HepG2 (cell line): ENCODE measurements at regions of chr9 and their contacts with region 1.

Region 1: DNA sequence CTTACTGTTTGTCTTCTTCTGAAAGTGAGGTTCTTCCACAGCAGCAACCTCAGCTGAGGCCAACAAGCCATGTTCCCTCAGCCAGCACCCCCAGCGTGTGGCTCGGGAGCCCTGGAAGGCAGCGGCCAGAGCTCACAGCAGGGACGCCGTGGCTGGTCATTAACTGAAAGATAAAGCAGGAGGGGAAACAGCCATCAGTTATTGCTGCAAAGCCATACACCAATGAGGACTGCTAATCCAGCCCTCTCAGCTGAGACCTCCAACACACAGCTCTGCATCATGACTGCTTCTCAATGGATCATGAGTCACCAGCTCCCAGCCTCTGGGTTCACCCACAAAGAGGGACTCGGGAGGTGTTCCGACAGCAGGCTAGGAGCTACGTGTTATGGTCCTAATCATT is 24.3 kb downstream of the ABCA1 start:
- DNase-seq: peak; percentile 38
- ATAC-seq: peak; percentile 29
- H3K4me3 ChIP-seq: peak overlapping the region in 2 of 3 experiments; percentile 29 to 37; a peak in 3 of 6 replicates
- H3K27ac ChIP-seq: peak overlapping the region; percentile 43
- H3K4me1 ChIP-seq: peaks cover 100% of the 10 kb centered on the region
- H3K27me3 ChIP-seq: no peaks in the 10 kb centered on the region
- CTCF ChIP-seq: no peak
- EP300 ChIP-seq: no peak
- POLR2A ChIP-seq: peak in 1 of 2 experiments; percentile 25; a peak in 1 of 4 replicates
- RAD21 ChIP-seq: no peak

Region 2: DNA sequence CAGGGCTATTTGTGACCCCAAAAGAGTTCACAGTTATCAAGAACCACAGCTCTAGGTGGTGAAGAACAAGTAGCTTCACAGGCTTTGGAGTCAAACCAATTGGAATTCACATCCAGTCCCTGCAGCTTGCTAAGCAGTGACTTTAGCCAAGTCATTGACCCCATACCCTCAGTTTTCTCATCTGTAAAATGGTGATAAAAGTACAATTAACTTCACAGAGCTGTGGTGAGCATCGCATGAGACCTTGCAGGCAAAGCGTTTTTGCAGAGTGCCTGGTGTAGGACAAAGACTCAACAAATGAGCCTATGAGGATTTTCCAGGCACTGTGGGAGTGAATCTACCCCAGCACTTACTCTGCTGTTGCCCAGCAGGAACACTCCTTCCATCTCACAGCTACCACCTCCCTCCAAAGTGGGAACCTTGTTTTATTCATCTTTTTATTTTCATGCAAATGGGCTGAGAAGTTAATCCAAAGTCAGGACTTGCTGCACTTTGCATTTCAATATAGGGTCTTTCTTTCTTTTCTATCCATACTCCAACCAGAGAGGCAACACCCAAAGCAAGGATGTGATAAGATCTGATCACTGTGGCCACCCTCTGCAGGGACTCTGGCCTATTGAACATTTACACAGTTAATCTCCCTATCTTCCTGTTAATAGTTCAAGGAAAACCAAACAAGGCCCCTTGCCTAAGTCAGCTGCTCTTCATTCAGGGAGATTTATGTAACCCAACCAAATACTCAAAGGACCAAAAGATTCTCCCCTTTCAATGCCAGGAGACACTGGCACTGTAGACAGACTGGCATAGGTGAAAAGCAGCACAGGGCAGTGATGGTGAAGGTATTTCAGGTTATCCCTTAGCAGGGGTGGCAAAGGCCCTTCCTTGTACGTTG is 17.5 kb before region 1 on chr9:
- CTCF ChIA-PET with region 1: no interaction called
- POLR2A ChIA-PET with region 1: interaction called, 94 read pairs
- in situ Hi-C with region 1: no loop called
- intact Hi-C with region 1: no loop called
- DNase-seq: peak; percentile 93
- ATAC-seq: peak; percentile 72
- H3K4me3 ChIP-seq: peak overlapping the region in 1 of 3 experiments; percentile 49; a peak in 1 of 6 replicates
- H3K27ac ChIP-seq: peak overlapping the region; percentile 85
- H3K4me1 ChIP-seq: peaks cover 97% of the 10 kb centered on the region
- H3K27me3 ChIP-seq: no peaks in the 10 kb centered on the region
- CTCF ChIP-seq: no peak
- EP300 ChIP-seq: peak; percentile 76 to 98; a peak in 3 of 4 replicates
- POLR2A ChIP-seq: peak; percentile 33; a peak in 1 of 4 replicates
- RAD21 ChIP-seq: no peak

Region 3: DNA sequence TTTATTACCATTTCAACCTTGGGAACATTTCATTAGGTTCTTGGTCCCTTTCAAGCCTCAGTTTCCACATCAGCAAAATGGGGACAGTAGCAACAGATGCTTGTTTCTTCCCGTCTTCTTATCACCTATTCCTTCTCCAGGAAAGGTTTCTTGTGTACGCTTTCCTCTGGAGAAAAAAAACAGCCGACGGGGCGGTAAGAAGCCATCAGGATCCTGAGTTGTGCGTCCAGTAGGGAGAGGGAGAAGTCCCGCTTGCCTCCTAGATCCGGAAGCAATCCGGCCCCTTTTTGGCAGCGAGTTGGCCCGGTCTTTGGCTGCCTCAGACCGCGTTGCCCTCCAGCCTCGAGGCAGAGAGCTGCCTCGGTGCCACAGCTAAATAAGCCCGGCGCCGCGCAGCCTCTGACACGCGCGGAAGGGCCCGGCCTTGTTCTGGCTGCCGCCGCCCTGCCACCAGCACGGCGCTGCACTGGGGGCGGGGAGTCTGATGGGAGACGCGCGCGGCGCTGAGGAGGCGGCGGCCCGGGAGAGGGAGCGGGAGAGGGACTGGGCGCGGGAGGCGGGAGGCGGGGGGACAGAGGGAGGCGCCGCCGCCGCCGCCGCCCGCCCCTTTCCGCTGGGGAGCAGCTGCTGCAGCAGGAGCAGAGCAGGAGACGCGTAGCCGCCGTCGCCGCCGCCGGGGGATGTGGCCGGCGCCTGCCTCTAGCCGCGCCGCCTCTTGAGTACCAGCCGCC is 340.6 kb after region 1 on chr9 and contains the start of gene SLC44A1:
- CTCF ChIA-PET with region 1: no interaction called
- POLR2A ChIA-PET with region 1: interaction called, 10 read pairs
- in situ Hi-C with region 1: no loop called
- intact Hi-C with region 1: no loop called
- DNase-seq: peak; percentile 86
- ATAC-seq: peak; percentile 97
- H3K4me3 ChIP-seq: peak within 1 kb of the TSS; percentile 93 to 98 (median 97)
- H3K27ac ChIP-seq: peak within 1 kb of the TSS; percentile 68
- H3K4me1 ChIP-seq: peaks cover 63% of the 10 kb centered on the region
- H3K27me3 ChIP-seq: no peaks in the 10 kb centered on the region
- CTCF ChIP-seq: peak; percentile 54; the same call in 1 of the 2 replicates
- EP300 ChIP-seq: peak; percentile 64 to 81; a peak in 3 of 4 replicates
- POLR2A ChIP-seq: peak; percentile 57 to 62
- RAD21 ChIP-seq: peak; percentile 81; the same call in 1 of the 2 replicates
- total RNA-seq, gene SLC44A1: 30.4 and 40.8 TPM in 2 replicates